ENCODE measurements at regions of chr11 and their contacts with region 1.

Region 1: GRCh38 chr11:236774-237767 is at the start of gene PSMD13:
- DNase-seq: peak; percentile 80 to 90 (median 83)
- H3K4me3 ChIP-seq: peak within 1 kb of the TSS; percentile 88
- H3K27ac ChIP-seq: peak within 1 kb of the TSS; percentile 57 to 90
- H3K4me1 ChIP-seq: peaks cover 8% of the 10 kb centered on the region
- H3K27me3 ChIP-seq: no peaks in the 10 kb centered on the region
- CTCF ChIP-seq: peak in 1 of 3 donors; percentile 35
- EP300 ChIP-seq: no peak
- POLR2A ChIP-seq: peak; percentile 58
- total RNA-seq, gene PSMD13: 66.2 to 80.1 (median 75.8) TPM

Region 2: DNA sequence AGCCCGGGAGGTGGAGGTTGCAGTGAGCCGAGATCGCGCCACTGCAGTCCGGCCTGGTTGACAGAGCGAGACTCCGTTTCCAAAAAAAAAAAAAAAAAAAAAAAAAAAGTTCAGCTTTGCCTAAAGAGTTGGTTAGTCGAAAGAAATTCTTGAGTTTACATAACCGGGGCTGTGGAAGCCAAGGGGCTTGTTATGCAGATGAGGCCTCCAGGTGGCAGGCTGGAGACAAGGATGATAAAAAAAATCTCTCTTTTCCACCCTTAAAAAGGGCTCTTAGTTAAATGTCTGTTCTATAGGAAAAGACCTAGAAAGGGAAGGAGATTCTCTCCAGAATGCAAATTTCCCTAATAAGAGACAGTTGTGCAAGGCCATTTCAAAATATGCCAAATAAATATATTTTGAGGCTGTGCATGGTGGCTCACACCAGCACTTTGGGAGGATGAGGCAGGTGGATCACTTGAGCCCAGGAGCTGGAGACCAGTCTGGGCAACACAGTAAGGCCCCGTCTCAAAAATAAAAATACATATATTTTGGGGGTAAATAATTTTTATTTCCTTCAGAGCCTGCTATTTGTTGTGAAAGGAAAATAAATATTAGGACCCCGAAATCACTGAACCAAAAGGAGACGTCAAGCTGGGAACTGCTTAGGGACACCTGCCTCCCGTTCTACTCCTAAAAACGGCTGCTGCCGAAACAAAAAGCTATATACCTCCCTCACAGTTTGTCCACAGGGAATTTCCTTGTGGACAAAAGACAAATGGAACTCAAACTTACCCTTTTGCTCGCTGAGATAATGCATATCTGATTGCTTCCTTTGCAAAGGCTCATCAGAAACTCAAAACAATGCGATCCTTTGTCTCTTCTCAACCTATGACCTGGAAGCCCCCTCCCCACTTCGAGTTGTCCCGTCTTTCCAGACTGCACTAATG is 68.1 kb after region 1 on chr11:
- intact Hi-C with region 1: loop called in 1 of 4 experiments (anchors 10 kb)
- DNase-seq: peak; percentile 74 to 90 (median 83)
- H3K4me3 ChIP-seq: no peak overlapping the region
- H3K27ac ChIP-seq: no peak overlapping the region
- H3K4me1 ChIP-seq: peaks cover 8% of the 10 kb centered on the region
- H3K27me3 ChIP-seq: no peaks in the 10 kb centered on the region
- CTCF ChIP-seq: peak; percentile 49 to 85 (median 82)
- EP300 ChIP-seq: no peak
- POLR2A ChIP-seq: peak; percentile 13

Measured in ovary (tissue), 10 donors.